ENCODE measurements at regions of chr1 and their contacts with region 1.

Region 1: GRCh38 chr1:246699095-246699735 is 25.0 kb upstream of the SCCPDH start:
- DNase-seq: peak; percentile 89
- ATAC-seq: peak; percentile 98

Region 2: DNA sequence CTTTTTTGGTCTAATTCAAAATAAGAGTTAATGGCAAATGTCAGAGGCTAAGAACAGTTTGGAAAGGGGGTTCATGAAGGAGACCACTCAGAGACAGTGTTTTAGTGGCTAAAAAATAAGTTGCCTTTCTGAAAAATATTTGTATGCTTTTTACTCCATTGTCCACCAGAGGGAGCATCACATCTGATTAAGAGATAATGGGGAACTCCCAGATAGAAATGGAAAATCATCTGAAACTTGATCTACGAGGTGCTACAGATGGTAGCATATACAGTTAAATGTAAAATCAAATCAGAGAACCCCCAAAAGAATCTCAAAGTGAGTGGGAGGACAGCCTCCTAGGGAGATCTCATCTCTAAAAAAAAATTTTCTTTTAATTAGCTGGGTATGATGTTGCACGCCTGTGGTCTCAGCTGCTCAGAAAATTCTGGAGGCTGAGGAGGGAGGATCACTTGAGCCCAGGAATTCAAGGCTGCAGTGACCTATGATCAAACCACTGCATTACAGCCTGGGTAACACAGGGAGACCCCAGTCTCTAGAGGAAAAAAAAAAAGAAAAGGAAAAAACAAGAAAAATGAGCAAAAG is 201.8 kb before region 1 on chr1:
- intact Hi-C with region 1: loop called (anchors 5 kb)
- DNase-seq: no peak
- ATAC-seq: no peak

Region 3: DNA sequence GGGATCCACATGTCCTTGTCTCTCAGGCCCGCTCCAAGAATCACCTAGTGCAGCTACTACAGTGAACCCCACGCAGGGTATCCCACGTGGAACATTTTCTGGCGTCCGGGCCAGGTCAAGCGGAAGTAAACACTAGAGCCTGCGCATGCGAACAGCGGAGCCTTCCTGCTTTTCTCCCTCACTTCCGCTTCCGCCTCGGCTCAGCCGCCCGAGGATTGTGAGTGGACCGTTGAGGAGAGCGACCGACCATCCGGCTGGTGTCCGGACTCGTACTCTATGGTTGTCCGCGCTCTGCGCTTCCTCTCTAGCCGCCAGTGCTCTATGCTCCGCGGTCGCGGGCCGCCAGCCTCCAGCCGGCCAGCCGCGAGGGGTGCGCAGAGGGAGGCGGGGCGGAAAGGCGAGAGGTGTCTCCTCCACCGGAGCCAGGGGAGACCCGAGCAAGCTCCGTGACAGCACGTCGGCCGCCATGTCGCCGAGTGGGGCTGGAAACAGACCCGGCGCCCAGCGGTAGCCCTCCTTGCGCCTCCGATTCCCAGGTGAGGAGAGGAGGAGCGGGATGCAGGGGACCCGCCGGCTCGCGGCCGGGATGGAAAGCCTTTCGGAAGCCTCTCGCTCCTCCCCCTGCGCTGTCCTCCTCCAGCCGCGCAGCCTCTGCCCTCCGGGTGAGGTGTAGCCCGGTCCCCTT is 132.9 kb before region 1 on chr1 and contains the starts of genes CNST and TFB2M:
- intact Hi-C with region 1: loop called (anchors 10 kb)
- DNase-seq: peak; percentile 98
- ATAC-seq: peak; percentile 98
- total RNA-seq, gene CNST: 20.2 TPM
- total RNA-seq, gene TFB2M: 17.4 TPM

Region 4: GRCh38 chr1:246647113-246647512 is 52.1 kb before region 1 on chr1:
- intact Hi-C with region 1: loop called (anchors 10 kb)
- DNase-seq: peak; percentile 79
- ATAC-seq: peak; percentile 97